HEK293T (cell line): ENCODE measurements at regions of chr17 and their contacts with region 1.

Region 1: GRCh38 chr17:81291662-81292061 is 3.4 kb downstream of the SLC38A10 start:
- DNase-seq: peak; percentile 86

Region 2: DNA sequence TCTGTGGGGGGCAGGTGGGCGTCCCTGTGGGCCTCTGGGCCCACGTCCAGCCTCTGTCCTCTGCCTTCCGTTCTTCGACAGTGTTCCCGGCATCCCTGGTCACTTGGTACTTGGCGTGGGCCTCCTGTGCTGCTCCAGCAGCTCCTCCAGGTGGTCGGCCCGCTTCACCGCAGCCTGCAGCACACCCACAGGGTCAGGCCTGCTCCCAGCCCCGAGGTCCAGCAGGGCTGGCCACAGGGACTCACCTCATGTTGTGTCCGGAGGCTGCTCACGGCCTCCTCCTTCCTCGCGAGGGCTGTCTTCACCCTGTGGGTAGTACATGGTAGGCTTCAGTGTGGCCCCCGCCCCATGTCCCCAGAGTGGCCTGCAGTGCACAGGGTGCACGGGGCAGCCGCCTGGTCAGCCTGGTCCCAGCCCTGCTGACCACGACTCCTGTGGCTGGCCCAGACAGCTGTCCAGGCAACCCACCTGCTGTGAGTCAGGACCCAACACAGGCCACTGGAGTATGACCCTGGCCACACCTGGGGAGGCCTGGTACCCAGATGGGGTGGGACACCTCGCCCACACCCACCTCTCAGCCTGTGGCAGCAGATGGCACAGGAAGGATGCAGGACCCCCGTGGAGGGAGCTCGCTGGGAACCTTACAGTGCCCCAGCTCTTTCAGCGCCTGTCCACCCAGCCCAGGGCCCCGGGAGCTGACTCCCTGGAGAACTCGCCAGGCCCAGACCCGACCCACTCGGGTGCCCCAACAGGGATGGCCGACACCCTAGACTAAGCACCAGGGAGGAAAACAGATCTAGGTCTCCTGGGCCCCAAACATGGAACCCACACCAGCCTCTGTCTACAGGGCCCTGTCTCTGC is 101.8 kb before region 1 on chr17:
- CTCF ChIA-PET with region 1: no interaction called
- POLR2A ChIA-PET with region 1: no interaction called
- DNase-seq: no peak

Region 3: DNA sequence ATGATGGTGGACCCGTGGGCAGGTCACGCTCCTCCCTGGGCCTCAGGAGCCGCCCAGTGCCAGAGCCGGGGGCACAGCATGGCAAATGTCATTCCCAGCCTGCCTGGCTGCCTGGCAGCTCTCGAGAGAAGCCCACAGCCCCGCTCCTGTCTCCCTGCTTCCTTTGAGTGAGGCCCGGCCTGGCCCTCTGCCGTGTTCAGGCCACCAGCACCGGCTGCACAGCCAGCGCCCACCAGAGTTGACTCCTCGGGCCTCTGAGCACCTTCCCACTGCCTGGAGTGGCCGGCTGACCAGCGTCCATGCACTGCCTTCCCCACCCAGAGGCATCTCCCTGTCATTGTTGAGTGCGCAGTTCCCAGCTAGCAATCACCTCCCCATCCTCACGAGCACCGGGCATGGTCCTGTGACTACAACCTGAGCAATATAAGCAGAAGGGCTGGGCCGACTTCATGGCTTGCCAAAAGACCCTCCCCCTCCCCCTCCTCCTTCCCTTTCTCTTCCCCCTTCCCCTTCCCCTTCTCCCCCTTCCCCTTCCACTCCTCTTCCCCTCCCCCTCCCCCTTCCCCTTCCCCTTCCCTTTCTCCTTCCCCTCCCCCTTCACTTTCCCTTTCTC is 15.3 kb after region 1 on chr17:
- CTCF ChIA-PET with region 1: interaction called, 12 read pairs
- POLR2A ChIA-PET with region 1: interaction called, 6 read pairs
- DNase-seq: no peak